Posterior vena cava (tissue), 2 donors: ENCODE measurements at regions of chr4 and their contacts with region 1.

Region 1: DNA sequence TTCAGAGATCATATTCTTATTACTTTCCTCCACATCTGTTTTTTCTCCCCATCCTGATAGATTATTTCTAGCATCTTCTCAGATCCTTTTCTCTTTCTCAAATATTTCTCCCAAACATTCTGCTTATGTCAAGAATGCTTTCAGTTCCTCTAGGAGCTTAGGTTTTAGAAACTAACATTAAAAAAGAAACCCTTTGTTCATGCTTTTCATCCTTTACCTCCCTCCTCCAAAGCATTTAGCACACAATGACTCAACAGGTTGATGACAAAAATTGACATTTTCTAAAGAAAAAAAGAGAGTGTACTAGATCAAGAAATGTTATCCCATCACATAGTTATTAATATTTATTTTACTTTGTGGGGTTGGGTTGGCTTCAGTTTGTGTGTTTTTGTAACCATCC is 16.5 kb upstream of the ALB start:
- DNase-seq: no peak

Region 2: DNA sequence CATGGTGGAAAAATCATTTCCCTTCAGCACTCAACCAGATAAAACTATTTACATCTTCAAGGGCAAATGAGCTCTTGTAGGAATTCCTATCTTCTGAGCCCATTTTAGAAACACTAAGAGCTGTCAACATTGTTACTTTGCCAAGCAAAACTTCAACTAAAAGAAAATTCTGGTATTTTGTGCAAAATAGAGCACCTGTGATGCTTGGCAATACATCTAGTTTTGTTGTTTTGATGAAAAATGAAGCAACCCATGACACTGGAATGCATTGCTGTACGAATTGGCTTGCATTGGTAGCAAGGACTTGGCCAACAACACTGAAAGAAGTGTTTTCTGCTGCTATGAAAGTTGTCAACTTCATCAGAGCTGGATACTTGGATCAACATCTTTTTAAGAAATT is 512.4 kb before region 1 on chr4:
- intact Hi-C with region 1: no loop called
- DNase-seq: no peak

Region 3: GRCh38 chr4:73407227-73407673 is 19.7 kb after region 1 on chr4:
- intact Hi-C with region 1: loop called in 1 of 2 experiments (anchors 1 kb)
- DNase-seq: no peak